Ascending aorta (tissue), 2 donors: ENCODE measurements at regions of chr10 and their contacts with region 1.

Region 1: DNA sequence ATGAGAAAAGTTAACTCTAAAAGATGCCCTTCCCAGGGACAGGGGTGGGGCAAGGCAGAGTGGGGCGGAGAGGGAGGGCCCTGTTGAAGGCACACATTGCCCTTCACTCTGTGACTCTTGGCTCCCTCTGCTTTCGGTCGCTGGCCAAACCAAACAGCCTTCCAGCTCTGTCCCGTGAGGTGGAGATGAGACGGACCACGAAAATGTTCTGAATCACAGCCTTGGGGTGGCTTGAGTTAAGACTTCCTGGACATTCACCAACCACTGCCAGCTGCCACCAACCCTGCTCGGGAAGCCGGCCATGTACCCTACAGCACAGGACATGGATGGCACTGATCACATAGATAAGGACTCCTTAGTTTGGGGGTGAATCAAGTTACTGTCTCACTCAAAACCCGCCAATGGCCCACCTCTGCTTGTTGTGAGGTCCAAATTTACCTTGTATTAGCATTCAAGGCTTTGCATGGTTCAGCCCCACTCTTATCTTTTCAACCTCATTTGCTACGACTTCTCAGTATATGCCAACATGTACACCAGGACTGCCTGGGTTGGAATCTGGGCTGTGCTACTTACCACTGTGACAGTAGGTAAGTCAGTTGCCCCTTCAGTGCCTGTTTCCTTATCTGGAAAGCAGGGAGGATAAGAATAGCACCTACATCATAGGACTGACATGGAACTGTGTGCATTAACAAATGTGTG is 28.1 kb downstream of the ITPRIP start:
- DNase-seq: peak; percentile 76 to 97
- H3K4me3 ChIP-seq: no peak overlapping the region
- H3K27ac ChIP-seq: peak overlapping the region; percentile 77 to 87
- H3K4me1 ChIP-seq: peaks cover 0 to 30% of the 10 kb centered on the region in 2 donors
- H3K27me3 ChIP-seq: no peaks in the 10 kb centered on the region
- CTCF ChIP-seq: no peak

Region 2: GRCh38 chr10:104328896-104329710 is 19.0 kb after region 1 on chr10:
- intact Hi-C with region 1: loop called (anchors 1 kb)
- DNase-seq: peak; percentile 68 to 92
- H3K4me3 ChIP-seq: peak overlapping the region; percentile 7 to 46
- H3K27ac ChIP-seq: peak overlapping the region; percentile 74 to 86
- H3K4me1 ChIP-seq: peaks cover 43 to 88% of the 10 kb centered on the region in 2 donors
- H3K27me3 ChIP-seq: no peaks in the 10 kb centered on the region
- CTCF ChIP-seq: no peak

Region 3: DNA sequence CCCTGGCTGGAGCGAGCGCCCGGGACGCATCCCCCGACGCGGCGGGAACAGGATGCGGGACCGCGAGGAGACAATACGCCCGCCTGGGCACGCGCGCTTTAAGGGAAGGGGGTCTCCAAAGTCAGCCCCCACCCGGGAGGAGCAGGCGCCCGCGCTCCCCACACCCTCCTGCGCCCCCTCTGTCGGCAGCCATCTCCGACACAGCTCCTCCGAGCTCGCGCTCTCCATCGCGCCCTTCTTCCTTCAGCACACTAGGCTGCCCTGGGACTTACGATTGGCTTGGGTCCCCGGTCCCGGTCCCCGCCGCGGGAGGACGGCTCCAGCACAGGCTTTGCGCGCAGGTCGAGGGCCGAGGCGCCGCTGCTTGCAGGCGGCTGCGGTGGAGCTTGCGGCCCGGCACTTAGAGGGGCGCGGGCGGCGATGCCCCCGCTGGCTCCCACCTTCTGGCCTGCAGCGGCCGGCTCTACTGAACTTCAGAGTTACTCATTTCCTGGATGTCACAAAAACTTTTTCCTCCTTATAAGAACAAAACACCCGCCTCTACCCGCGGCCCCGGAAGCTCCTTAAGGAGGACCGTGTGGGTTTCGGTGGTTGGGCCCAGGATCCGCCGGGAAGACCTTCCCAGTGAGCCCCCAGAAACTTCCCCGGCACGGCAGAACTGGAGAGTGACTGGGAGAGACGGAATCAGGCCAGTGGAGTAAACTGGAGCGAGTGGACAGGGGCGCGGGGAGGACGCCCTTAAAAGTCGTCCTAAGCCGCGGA is 28.0 kb after region 1 on chr10 and contains the start of gene ITPRIP:
- intact Hi-C with region 1: loop called (anchors 1 kb)
- DNase-seq: peak; percentile 54 to 89
- H3K4me3 ChIP-seq: peak within 1 kb of the TSS; percentile 63 to 86
- H3K27ac ChIP-seq: peak within 1 kb of the TSS; percentile 92 to 98
- H3K4me1 ChIP-seq: peaks cover 6 to 44% of the 10 kb centered on the region in 2 donors
- H3K27me3 ChIP-seq: no peaks in the 10 kb centered on the region
- CTCF ChIP-seq: peak; percentile 7 to 17 (median 12)
- total RNA-seq, gene ITPRIP: 51.0 TPM

Region 4: DNA sequence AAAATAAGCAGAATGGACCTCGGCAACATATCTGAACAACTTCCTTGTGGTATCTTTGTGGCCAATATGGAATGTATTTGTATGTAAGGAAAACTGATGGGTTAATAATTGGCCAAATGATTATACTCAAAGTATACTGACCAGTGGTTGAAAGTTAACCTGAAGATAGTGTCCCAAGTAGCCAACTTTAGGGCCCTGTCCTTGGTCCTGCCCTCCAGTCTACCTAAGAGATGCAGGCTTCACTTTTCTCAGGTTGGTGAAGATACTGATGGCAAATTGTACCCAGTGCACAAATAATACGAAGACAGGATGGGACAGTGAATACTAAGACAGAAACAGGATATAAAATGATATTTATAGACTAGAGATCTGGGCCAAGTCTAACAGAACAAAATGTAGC is 440.2 kb after region 1 on chr10:
- intact Hi-C with region 1: no loop called
- DNase-seq: no peak
- H3K4me3 ChIP-seq: no peak overlapping the region
- H3K27ac ChIP-seq: no peak overlapping the region
- H3K4me1 ChIP-seq: no peaks in the 10 kb centered on the region
- H3K27me3 ChIP-seq: no peaks in the 10 kb centered on the region
- CTCF ChIP-seq: no peak